ENCODE measurements at regions of chr22 and their contacts with region 1.

Region 1: DNA sequence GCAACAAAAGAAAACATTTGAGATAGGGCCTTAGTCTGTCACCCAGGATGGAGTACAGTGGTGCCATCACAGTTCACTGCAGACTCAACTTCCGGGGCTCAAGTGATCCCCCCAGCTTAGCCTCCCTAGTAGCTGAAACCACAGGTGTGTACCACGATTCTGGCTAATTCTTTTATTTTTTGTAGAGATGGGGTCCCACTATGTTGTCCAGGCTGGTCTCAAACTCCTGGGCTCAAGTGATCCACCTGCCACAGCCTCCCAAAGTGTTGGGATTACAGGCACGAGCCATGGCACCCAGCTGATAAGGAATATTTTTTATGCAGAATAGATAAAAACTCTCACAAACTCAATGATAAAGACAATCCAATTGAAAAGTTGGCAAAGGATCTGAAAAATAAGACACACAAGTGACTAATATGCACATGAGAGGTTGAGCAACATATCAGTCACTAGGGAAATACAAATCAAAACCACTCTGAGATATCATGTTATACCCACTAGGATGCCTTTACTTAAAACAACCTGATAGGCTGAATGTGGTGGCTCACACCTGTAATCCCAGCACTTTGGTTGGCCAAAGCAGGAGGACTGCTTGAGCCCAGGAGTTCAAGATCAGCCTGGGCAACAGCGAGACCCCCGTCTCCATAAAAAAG is 33.9 kb upstream of the CLTCL1 start:
- DNase-seq: no peak
- ATAC-seq: no peak
- H3K4me3 ChIP-seq: no peak overlapping the region
- H3K4me3 Mint-ChIP-seq: no peak overlapping the region
- H3K27ac ChIP-seq: no peak overlapping the region
- H3K27ac Mint-ChIP-seq: no peak overlapping the region
- H3K4me1 ChIP-seq: no peaks in the 10 kb centered on the region
- H3K4me1 Mint-ChIP-seq: no peaks in the 10 kb centered on the region
- H3K27me3 ChIP-seq: no peaks in the 10 kb centered on the region
- H3K27me3 Mint-ChIP-seq: no peaks in the 10 kb centered on the region

Region 2: DNA sequence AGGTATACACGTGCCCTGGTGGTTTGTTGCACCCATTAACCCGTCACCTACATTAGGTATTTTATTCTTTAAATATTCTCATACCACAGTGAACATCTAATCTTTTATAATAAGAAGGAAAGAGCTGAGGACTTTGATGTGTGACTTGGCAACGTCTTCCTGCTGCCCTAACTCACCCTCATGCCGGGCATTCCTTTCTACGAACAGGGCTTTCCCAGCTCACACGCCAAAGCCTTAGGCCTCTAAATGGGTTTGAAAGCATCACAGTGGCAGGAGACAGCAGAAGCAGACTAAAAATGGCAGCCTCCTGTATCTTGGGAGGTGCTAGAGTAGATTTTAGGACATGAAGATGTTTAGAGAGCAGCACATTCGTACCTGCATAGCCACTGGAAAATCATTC is 86.5 kb before region 1 on chr22:
- CTCF ChIA-PET with region 1: no interaction called
- POLR2A ChIA-PET with region 1: interaction called in 1 of 2 experiments, 10 read pairs
- DNase-seq: no peak
- ATAC-seq: no peak
- H3K4me3 ChIP-seq: no peak overlapping the region
- H3K4me3 Mint-ChIP-seq: no peak overlapping the region
- H3K27ac ChIP-seq: no peak overlapping the region
- H3K27ac Mint-ChIP-seq: no peak overlapping the region
- H3K4me1 ChIP-seq: no peaks in the 10 kb centered on the region
- H3K4me1 Mint-ChIP-seq: no peaks in the 10 kb centered on the region
- H3K27me3 ChIP-seq: peaks cover 0 to 4% of the 10 kb centered on the region in 2 experiments
- H3K27me3 Mint-ChIP-seq: peaks cover 7 to 13% of the 10 kb centered on the region in 2 donors

Region 3: GRCh38 chr22:19455585-19456370 is 130.4 kb after region 1 on chr22:
- CTCF ChIA-PET with region 1: no interaction called
- POLR2A ChIA-PET with region 1: no interaction called
- DNase-seq: no peak
- ATAC-seq: peak in 1 of 4 experiments; percentile 12
- H3K4me3 ChIP-seq: no peak overlapping the region
- H3K4me3 Mint-ChIP-seq: no peak overlapping the region
- H3K27ac ChIP-seq: no peak overlapping the region
- H3K27ac Mint-ChIP-seq: no peak overlapping the region
- H3K4me1 ChIP-seq: no peaks in the 10 kb centered on the region
- H3K4me1 Mint-ChIP-seq: no peaks in the 10 kb centered on the region
- H3K27me3 ChIP-seq: no peaks in the 10 kb centered on the region
- H3K27me3 Mint-ChIP-seq: no peaks in the 10 kb centered on the region

Measured in T-cell (primary cell).